ENCODE measurements at regions of chr5 and their contacts with region 1.

Region 1: GRCh38 chr5:146188358-146188757 is 5.9 kb upstream of the LARS1 start:
- DNase-seq: no peak
- H3K4me3 Mint-ChIP-seq: no peak overlapping the region
- H3K27ac Mint-ChIP-seq: no peak overlapping the region
- H3K4me1 Mint-ChIP-seq: peaks cover 10% of the 10 kb centered on the region
- H3K27me3 Mint-ChIP-seq: peaks cover 14% of the 10 kb centered on the region

Region 2: GRCh38 chr5:146238973-146239372 is 50.6 kb after region 1 on chr5:
- intact Hi-C with region 1: loop called (anchors 2 kb)
- DNase-seq: no peak
- H3K4me3 Mint-ChIP-seq: no peak overlapping the region
- H3K27ac Mint-ChIP-seq: peak overlapping the region; percentile 17
- H3K4me1 Mint-ChIP-seq: peaks cover 6% of the 10 kb centered on the region
- H3K27me3 Mint-ChIP-seq: no peaks in the 10 kb centered on the region

Region 3: GRCh38 chr5:146291421-146292074 is 103.2 kb after region 1 on chr5:
- intact Hi-C with region 1: no loop called
- DNase-seq: peak; percentile 71
- H3K4me3 Mint-ChIP-seq: no peak overlapping the region
- H3K27ac Mint-ChIP-seq: no peak overlapping the region
- H3K4me1 Mint-ChIP-seq: no peaks in the 10 kb centered on the region
- H3K27me3 Mint-ChIP-seq: no peaks in the 10 kb centered on the region